K562 (cell line): ENCODE measurements at regions of chr1 and their contacts with region 1.

Region 1: GRCh38 chr1:3423245-3423829 is 31.1 kb upstream of the ARHGEF16 start:
- DNase-seq: peak in 2 of 4 experiments; percentile 27 to 28
- ATAC-seq: no peak; the same call in 2 of the 3 replicates
- H3K4me3 ChIP-seq: no peak overlapping the region
- H3K27ac ChIP-seq: no peak overlapping the region
- H3K4me1 ChIP-seq: peaks cover 0 to 21% of the 10 kb centered on the region in 2 experiments; a peak in 2 of 5 replicates
- H3K27me3 ChIP-seq: peaks cover 7 to 71% of the 10 kb centered on the region in 2 experiments
- CTCF ChIP-seq: no peak
- EP300 ChIP-seq: no peak
- POLR2A ChIP-seq: no peak
- RAD21 ChIP-seq: no peak

Region 2: GRCh38 chr1:2821966-2822620 is 601.2 kb before region 1 on chr1:
- CTCF ChIA-PET with region 1: no interaction called
- POLR2A ChIA-PET with region 1: interaction called, 3 read pairs
- in situ Hi-C with region 1: loop called (anchors 10 kb)
- intact Hi-C with region 1: no loop called
- DNase-seq: peak; percentile 34 to 75 (median 74)
- ATAC-seq: peak; percentile 96
- H3K4me3 ChIP-seq: no peak overlapping the region
- H3K27ac ChIP-seq: no peak overlapping the region
- H3K4me1 ChIP-seq: peaks cover 0 to 3% of the 10 kb centered on the region in 2 experiments; a peak in 1 of 5 replicates
- H3K27me3 ChIP-seq: no peaks in the 10 kb centered on the region; a peak in 1 of 5 replicates
- CTCF ChIP-seq: peak; percentile 57 to 72 (median 62)
- EP300 ChIP-seq: no peak
- POLR2A ChIP-seq: no peak
- RAD21 ChIP-seq: peak in 1 of 2 experiments; percentile 69; a peak in 2 of 4 replicates

Region 3: GRCh38 chr1:3000671-3001470 is 422.5 kb before region 1 on chr1:
- CTCF ChIA-PET with region 1: no interaction called
- POLR2A ChIA-PET with region 1: no interaction called
- in situ Hi-C with region 1: loop called (anchors 5 kb)
- intact Hi-C with region 1: no loop called
- DNase-seq: no peak
- ATAC-seq: no peak
- H3K4me3 ChIP-seq: no peak overlapping the region
- H3K27ac ChIP-seq: no peak overlapping the region
- H3K4me1 ChIP-seq: no peaks in the 10 kb centered on the region; a peak in 1 of 5 replicates
- H3K27me3 ChIP-seq: peaks cover 0 to 14% of the 10 kb centered on the region in 2 experiments; a peak in 3 of 5 replicates
- CTCF ChIP-seq: no peak
- EP300 ChIP-seq: no peak
- POLR2A ChIP-seq: no peak
- RAD21 ChIP-seq: no peak

Region 4: DNA sequence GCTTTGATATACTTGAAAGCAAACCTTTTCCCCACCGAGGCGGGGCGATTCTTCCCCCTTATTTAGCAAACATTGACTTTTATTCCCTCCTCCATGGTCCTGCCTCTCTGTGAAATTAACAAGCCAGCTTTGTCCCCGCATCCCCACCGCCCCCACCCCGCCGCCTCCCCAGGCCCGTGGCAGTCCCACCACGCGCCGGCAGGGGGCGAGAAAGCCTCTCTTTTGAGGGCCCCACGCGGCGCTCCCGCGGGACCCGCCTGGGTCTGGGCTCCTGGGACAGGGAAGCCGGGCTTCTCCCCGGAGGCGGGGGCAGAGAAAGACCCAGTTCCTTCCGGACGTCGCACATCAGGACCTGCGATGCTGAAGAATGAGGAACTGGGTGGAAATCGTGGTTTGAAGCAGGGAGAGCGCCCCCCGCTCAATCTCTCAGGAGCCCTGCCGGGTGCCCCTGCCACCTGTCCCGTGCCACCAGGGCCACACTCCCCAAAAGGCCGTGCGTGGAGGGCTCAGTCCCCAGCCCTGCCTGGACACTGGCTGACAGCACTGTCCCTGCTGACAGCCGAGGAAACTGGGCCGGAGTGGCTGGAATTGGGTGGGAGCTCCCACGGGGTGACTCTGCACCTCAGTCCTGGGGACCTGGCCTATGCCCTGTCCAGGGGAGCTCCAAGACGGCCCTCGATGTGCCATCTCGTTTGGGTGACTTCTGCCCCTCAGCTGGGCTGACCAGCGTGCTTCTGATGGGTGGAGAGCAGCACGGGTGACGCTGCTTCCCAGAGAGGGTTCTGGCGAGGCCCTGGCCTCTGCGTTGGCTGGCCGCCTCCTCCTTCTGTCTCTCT is 410.7 kb before region 1 on chr1:
- CTCF ChIA-PET with region 1: interaction called, 13 read pairs
- POLR2A ChIA-PET with region 1: no interaction called
- in situ Hi-C with region 1: no loop called
- intact Hi-C with region 1: loop called (anchors 2 kb)
- DNase-seq: peak; percentile 52 to 91 (median 88)
- ATAC-seq: peak; percentile 94
- H3K4me3 ChIP-seq: no peak overlapping the region
- H3K27ac ChIP-seq: no peak overlapping the region
- H3K4me1 ChIP-seq: 0 out of 5 replicates have a peak, but pooled peaks cover 0 to 5% of the 10 kb centered on the region in 2 experiments
- H3K27me3 ChIP-seq: peaks cover 0 to 34% of the 10 kb centered on the region in 2 experiments; a peak in 2 of 5 replicates
- CTCF ChIP-seq: peak; percentile 50 to 74 (median 61); a peak in 5 of 6 replicates
- EP300 ChIP-seq: no peak
- POLR2A ChIP-seq: no peak
- RAD21 ChIP-seq: peak; percentile 50 to 62